ENCODE measurements at regions of chr16 and their contacts with region 1.

Region 1: GRCh38 chr16:48353565-48354163 is 31.5 kb downstream of the SIAH1 start:
- DNase-seq: peak; percentile 73
- CTCF ChIP-seq: peak; percentile 77

Region 2: GRCh38 chr16:48526058-48526957 is 172.6 kb after region 1 on chr16:
- in situ Hi-C with region 1: loop called (anchors 10 kb)
- DNase-seq: peak; percentile 73
- CTCF ChIP-seq: peak; percentile 74

Region 3: GRCh38 chr16:48623304-48624016 is 269.8 kb after region 1 on chr16:
- in situ Hi-C with region 1: loop called (anchors 10 kb)
- DNase-seq: peak; percentile 89
- CTCF ChIP-seq: peak; percentile 100

Measured in GM13977 (cell line).